Activated CD4-positive, alpha-beta T cell treated with anti-CD3 and anti-CD28 coated beads for 36 hours (primary cell): ENCODE measurements at regions of chr1 and their contacts with region 1.

Region 1: GRCh38 chr1:197775282-197776262 is at the start of gene DENND1B:
- DNase-seq: peak; percentile 88
- ATAC-seq: peak; percentile 78
- H3K4me3 Mint-ChIP-seq: peak within 1 kb of the TSS; percentile 90
- H3K27ac Mint-ChIP-seq: peak within 1 kb of the TSS; percentile 99
- H3K4me1 Mint-ChIP-seq: peaks cover 66% of the 10 kb centered on the region
- H3K27me3 Mint-ChIP-seq: no peaks in the 10 kb centered on the region
- total RNA-seq, gene DENND1B: 9.6 to 12.6 TPM

Region 2: DNA sequence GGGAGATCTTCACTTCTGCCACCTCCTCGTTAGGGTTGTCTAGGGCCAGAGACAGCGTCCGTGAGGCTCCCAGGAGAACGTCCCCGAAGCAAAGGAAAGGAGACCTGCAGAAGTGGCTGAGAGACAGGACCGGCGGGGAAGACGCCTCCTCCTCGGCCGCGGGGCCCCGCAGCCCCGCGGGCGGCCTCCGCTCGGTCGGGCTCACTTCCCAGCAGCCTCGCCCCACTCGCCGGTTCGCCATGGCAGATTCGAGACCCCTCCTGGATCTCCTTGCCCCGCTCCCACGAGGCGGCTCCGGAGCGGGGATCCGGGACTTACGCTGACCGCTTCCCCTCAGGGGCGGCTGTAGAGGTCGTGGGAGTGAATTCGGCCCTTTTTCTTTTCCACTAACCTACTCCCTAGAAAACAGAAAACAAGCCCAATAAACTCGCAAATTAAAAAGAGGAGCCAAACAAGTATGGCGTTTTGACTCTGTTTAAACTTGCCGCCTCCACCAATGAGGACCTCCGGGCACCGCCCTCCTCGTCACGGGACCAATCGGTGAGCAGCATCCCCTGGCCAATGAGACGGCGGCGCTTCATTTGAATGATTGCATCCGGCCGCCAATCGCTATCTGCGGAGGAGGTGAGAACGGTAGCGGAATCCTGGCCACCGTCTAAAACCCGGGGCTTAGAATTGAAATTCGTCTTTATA is 629.2 kb before region 1 on chr1 and contains the start of gene ASPM:
- CTCF ChIA-PET with region 1: no interaction called
- POLR2A ChIA-PET with region 1: no interaction called
- intact Hi-C with region 1: loop called in 1 of 2 experiments (anchors 10 kb)
- DNase-seq: peak; percentile 97
- ATAC-seq: peak; percentile 98
- H3K4me3 Mint-ChIP-seq: peak within 1 kb of the TSS; percentile 97
- H3K27ac Mint-ChIP-seq: peak within 1 kb of the TSS; percentile 91
- H3K4me1 Mint-ChIP-seq: peaks cover 13% of the 10 kb centered on the region
- H3K27me3 Mint-ChIP-seq: peaks cover 3% of the 10 kb centered on the region
- total RNA-seq, gene ASPM: 47.8 to 49.5 TPM

Region 3: DNA sequence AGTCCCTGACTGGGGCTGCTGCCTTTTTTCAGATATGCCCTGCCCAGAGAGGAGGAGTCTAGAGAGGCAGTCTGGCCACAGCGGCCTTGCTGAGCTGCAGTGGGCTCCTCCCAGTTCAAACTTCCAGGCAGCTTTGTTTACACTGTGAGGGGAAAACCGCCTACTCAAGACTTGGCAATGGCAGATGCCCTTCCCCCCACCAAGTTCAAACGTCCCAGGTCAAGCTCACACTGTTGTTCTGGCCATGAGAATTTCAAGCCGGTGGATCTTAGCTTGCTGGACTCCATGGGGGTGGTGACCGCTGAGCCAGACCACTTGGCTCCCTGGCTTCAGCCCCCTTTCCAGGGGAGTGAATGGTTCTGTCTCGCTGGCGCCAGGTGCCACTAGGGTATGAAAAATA is 108.6 kb after region 1 on chr1:
- CTCF ChIA-PET with region 1: no interaction called
- POLR2A ChIA-PET with region 1: no interaction called
- intact Hi-C with region 1: no loop called
- DNase-seq: no peak
- ATAC-seq: no peak
- H3K4me3 Mint-ChIP-seq: no peak overlapping the region
- H3K27ac Mint-ChIP-seq: no peak overlapping the region
- H3K4me1 Mint-ChIP-seq: no peaks in the 10 kb centered on the region
- H3K27me3 Mint-ChIP-seq: peaks cover 19% of the 10 kb centered on the region

Region 4: DNA sequence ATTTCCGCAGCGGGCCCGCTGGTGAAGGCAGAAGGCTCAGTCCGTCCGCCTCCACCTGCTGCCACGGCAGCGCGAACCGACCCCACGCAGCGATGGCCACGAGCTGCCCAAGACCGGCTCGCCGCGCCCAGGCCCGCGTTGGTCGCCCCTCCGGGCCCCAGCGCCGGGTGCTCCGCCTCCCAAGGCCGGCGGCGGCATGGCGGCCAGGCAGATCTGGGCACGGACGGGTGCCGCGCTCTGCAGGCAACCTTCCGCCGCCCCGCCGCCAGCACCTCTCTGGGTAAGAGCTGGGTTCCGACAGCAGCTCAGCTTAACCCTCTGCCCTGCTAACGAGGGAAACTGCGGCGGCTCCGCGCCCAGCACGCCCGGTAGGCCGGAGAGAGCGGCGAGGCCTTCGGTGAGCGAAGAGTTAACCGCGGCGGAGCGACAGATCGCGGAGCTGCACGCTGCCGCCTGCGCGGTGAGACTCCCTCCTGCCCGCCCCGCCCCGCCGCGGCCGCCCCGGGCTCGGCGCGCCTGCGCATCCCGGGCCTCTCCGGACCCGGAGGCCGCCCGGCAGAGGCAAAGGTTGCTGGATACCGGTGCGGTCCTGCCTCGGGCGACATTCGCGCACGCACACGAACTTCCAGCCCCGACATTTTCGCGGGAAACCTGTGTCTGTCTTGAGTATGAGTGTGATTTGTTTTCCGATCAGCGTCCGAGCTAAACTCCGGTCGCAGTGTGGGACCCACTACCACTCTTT is 127.1 kb after region 1 on chr1 and contains the start of gene C1orf53:
- CTCF ChIA-PET with region 1: interaction called, 3 read pairs
- POLR2A ChIA-PET with region 1: no interaction called
- intact Hi-C with region 1: loop called (anchors 1 to 5 kb)
- DNase-seq: peak; percentile 87
- ATAC-seq: peak; percentile 95
- H3K4me3 Mint-ChIP-seq: peak within 1 kb of the TSS; percentile 76
- H3K27ac Mint-ChIP-seq: peak within 1 kb of the TSS; percentile 88
- H3K4me1 Mint-ChIP-seq: peaks cover 14% of the 10 kb centered on the region
- H3K27me3 Mint-ChIP-seq: peaks cover 37% of the 10 kb centered on the region
- total RNA-seq, gene C1orf53: 0.66 TPM in 1 of 2 experiments, not detected in the other

Region 5: GRCh38 chr1:198465201-198466144 is 689.9 kb after region 1 on chr1:
- CTCF ChIA-PET with region 1: no interaction called
- POLR2A ChIA-PET with region 1: no interaction called
- intact Hi-C with region 1: loop called in 1 of 2 experiments (anchors 2 kb)
- DNase-seq: no peak
- ATAC-seq: peak; percentile 74
- H3K4me3 Mint-ChIP-seq: no peak overlapping the region
- H3K27ac Mint-ChIP-seq: peak overlapping the region; percentile 58
- H3K4me1 Mint-ChIP-seq: peaks cover 20% of the 10 kb centered on the region
- H3K27me3 Mint-ChIP-seq: no peaks in the 10 kb centered on the region

Region 6: DNA sequence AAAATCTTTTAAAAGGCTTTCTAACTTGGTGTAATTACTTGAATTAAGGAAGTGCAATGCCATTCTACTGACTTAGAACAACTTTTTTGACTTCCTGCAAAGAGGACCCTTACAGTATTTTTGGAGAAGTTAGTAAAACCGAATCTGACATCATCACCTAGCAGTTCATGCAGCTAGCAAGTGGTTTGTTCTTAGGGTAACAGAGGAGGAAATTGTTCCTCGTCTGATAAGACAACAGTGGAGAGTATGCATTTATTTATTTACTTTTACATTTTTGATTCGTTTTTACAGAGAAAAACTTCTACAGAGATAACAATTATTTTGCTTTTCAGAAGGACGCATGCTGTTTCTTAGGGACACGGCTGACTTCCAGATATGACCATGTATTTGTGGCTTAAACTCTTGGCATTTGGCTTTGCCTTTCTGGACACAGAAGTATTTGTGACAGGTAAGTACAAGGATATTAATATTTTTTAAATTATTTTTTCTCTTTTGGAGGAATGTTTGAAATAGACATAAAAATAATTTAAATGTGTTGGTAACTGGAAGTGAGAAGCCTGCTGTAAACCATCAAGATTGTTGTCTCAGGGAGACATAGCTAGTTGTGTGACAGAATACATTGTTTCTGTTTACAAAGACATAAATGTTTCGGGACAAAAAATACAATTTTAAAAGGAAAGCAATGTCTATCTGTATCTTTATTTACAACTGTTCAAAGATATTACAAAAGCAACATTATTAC is 863.5 kb after region 1 on chr1 and contains the start of gene PTPRC:
- CTCF ChIA-PET with region 1: no interaction called
- POLR2A ChIA-PET with region 1: no interaction called
- intact Hi-C with region 1: loop called in 1 of 2 experiments (anchors 10 kb)
- DNase-seq: no peak
- ATAC-seq: peak; percentile 62
- H3K4me3 Mint-ChIP-seq: peak within 1 kb of the TSS; percentile 87
- H3K27ac Mint-ChIP-seq: peak within 1 kb of the TSS; percentile 99
- H3K4me1 Mint-ChIP-seq: peaks cover 52% of the 10 kb centered on the region
- H3K27me3 Mint-ChIP-seq: no peaks in the 10 kb centered on the region
- total RNA-seq, gene PTPRC: 458 to 564 TPM

Region 7: GRCh38 chr1:198880818-198881597 is 1105.4 kb after region 1 on chr1:
- CTCF ChIA-PET with region 1: no interaction called
- POLR2A ChIA-PET with region 1: no interaction called
- intact Hi-C with region 1: loop called in 1 of 2 experiments (anchors 5 kb)
- DNase-seq: peak; percentile 14
- ATAC-seq: peak; percentile 93
- H3K4me3 Mint-ChIP-seq: no peak overlapping the region
- H3K27ac Mint-ChIP-seq: peak overlapping the region; percentile 86
- H3K4me1 Mint-ChIP-seq: peaks cover 28% of the 10 kb centered on the region
- H3K27me3 Mint-ChIP-seq: no peaks in the 10 kb centered on the region